CD4-positive, alpha-beta memory T cell (primary cell): ENCODE measurements at regions of chr16 and their contacts with region 1.

Region 1: GRCh38 chr16:30335598-30336474 is 19.3 kb downstream of the CD2BP2 start:
- DNase-seq: peak in 1 of 5 donors; percentile 62
- H3K4me3 ChIP-seq: peak overlapping the region in 1 of 2 donors; percentile 47
- H3K4me3 Mint-ChIP-seq: peak overlapping the region; percentile 81 to 92 (median 86)
- H3K27ac ChIP-seq: peak overlapping the region; percentile 67
- H3K27ac Mint-ChIP-seq: peak overlapping the region; percentile 85 to 96 (median 90)
- H3K4me1 ChIP-seq: peaks cover 9% of the 10 kb centered on the region
- H3K4me1 Mint-ChIP-seq: peaks cover 8 to 31% (median 18%) of the 10 kb centered on the region in 4 donors
- H3K27me3 ChIP-seq: no peaks in the 10 kb centered on the region
- H3K27me3 Mint-ChIP-seq: no peaks in the 10 kb centered on the region

Region 2: GRCh38 chr16:30370444-30371247 is 34.8 kb after region 1 on chr16 and contains the start of gene TBC1D10B:
- CTCF ChIA-PET with region 1: no interaction called
- POLR2A ChIA-PET with region 1: interaction called, 34 read pairs
- intact Hi-C with region 1: loop called (anchors 2 kb)
- DNase-seq: peak; percentile 99 to 100 (median 100)
- H3K4me3 ChIP-seq: peak within 1 kb of the TSS; percentile 67 to 88
- H3K4me3 Mint-ChIP-seq: peak within 1 kb of the TSS; percentile 87 to 94 (median 90)
- H3K27ac ChIP-seq: peak within 1 kb of the TSS; percentile 72
- H3K27ac Mint-ChIP-seq: peak within 1 kb of the TSS; percentile 83 to 99 (median 95)
- H3K4me1 ChIP-seq: peaks cover 46% of the 10 kb centered on the region
- H3K4me1 Mint-ChIP-seq: peaks cover 43 to 60% (median 49%) of the 10 kb centered on the region in 4 donors
- H3K27me3 ChIP-seq: no peaks in the 10 kb centered on the region
- H3K27me3 Mint-ChIP-seq: peaks cover 0 to 2% of the 10 kb centered on the region in 2 donors
- total RNA-seq, gene TBC1D10B: 47.0 to 55.3 TPM

Region 3: GRCh38 chr16:30378236-30379204 is 42.7 kb after region 1 on chr16:
- CTCF ChIA-PET with region 1: no interaction called
- POLR2A ChIA-PET with region 1: interaction called, 10 read pairs
- intact Hi-C with region 1: loop called (anchors 2 kb)
- DNase-seq: peak; percentile 98 to 99 (median 99)
- H3K4me3 ChIP-seq: peak overlapping the region; percentile 84 to 91
- H3K4me3 Mint-ChIP-seq: peak overlapping the region; percentile 91 to 100 (median 96)
- H3K27ac ChIP-seq: peak overlapping the region; percentile 96
- H3K27ac Mint-ChIP-seq: peak overlapping the region; percentile 97 to 100 (median 100)
- H3K4me1 ChIP-seq: peaks cover 69% of the 10 kb centered on the region
- H3K4me1 Mint-ChIP-seq: peaks cover 32 to 71% (median 48%) of the 10 kb centered on the region in 4 donors
- H3K27me3 ChIP-seq: no peaks in the 10 kb centered on the region
- H3K27me3 Mint-ChIP-seq: no peaks in the 10 kb centered on the region